ENCODE measurements at regions of chr19 and their contacts with region 1.

Region 1: DNA sequence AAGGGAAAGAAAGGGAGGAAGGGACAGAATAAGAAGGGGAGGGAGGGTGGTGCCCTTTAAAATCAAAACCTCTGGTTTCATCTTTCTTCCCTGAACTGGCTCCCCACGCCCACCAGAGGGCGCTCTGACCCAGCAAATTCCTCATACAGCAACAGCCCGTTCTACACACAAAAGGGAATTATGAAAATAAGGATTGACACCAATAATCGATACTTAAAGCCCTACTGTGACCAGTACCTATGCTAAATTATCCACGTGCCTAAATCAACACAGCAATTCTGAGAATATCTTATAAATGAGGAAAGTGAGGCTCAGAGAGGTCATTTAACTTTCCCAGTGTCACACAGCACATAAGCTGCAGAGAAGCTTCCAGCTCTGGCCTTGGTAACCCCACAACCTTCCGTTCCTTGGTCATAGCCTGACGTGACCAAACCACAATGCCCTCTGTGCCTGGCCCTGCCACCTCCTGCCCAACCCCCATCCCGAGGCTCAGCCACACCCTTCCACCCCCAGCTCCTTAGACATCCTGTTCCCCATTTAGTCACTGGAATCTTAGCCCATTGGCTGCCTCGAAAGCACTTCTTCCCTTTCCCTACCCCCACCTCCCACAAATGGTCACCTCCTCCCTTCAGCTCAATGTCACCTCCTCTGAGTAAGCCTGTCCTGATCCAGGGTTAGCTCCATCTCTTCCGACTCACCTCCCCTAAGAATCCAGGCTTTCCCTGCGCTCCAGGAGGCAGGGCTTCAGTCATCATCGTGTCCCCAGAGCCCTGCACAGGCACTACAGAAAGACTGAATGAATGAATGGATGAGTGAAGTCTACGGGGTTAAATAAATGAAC is 34.2 kb upstream of the PNMA8B start:
- DNase-seq: peak; percentile 39 to 82 (median 71)
- H3K4me3 ChIP-seq: no peak overlapping the region
- H3K27ac ChIP-seq: no peak overlapping the region
- H3K4me1 ChIP-seq: no peaks in the 10 kb centered on the region
- H3K27me3 ChIP-seq: no peaks in the 10 kb centered on the region
- CTCF ChIP-seq: peak; percentile 69 to 83 (median 79)
- EP300 ChIP-seq: no peak
- POLR2A ChIP-seq: no peak

Region 2: GRCh38 chr19:46021531-46022041 is 508.3 kb before region 1 on chr19:
- intact Hi-C with region 1: loop called in 1 of 4 experiments (anchors 10 kb)
- DNase-seq: no peak
- H3K4me3 ChIP-seq: no peak overlapping the region
- H3K27ac ChIP-seq: no peak overlapping the region
- H3K4me1 ChIP-seq: no peaks in the 10 kb centered on the region
- H3K27me3 ChIP-seq: no peaks in the 10 kb centered on the region
- CTCF ChIP-seq: no peak
- EP300 ChIP-seq: no peak
- POLR2A ChIP-seq: no peak

Region 3: GRCh38 chr19:46299004-46299509 is 230.8 kb before region 1 on chr19:
- intact Hi-C with region 1: loop called in 1 of 4 experiments (anchors 10 kb)
- DNase-seq: peak; percentile 98 to 100 (median 99)
- H3K4me3 ChIP-seq: peak overlapping the region; percentile 44
- H3K27ac ChIP-seq: peak overlapping the region; percentile 66 to 82
- H3K4me1 ChIP-seq: peaks cover 16% of the 10 kb centered on the region
- H3K27me3 ChIP-seq: no peaks in the 10 kb centered on the region
- CTCF ChIP-seq: no peak
- EP300 ChIP-seq: peak; percentile 61
- POLR2A ChIP-seq: peak; percentile 23

Region 4: GRCh38 chr19:46661020-46661731 is 131.3 kb after region 1 on chr19 and contains the start of gene DACT3:
- intact Hi-C with region 1: loop called in 1 of 4 experiments (anchors 10 kb)
- DNase-seq: peak; percentile 100
- H3K4me3 ChIP-seq: peak within 1 kb of the TSS; percentile 87
- H3K27ac ChIP-seq: peak within 1 kb of the TSS; percentile 61 to 75
- H3K4me1 ChIP-seq: no peaks in the 10 kb centered on the region
- H3K27me3 ChIP-seq: no peaks in the 10 kb centered on the region
- CTCF ChIP-seq: peak in 1 of 3 donors; percentile 20
- EP300 ChIP-seq: peak; percentile 46
- POLR2A ChIP-seq: no peak
- total RNA-seq, gene DACT3: 7.6 to 56.5 (median 20.8) TPM